Posterior cingulate gyrus (tissue), 11 donors: ENCODE measurements at regions of chrX and their contacts with region 1.

Region 1: GRCh38 chrX:137432608-137433007 is 133.3 kb upstream of the ZIC3 start:
- DNase-seq: no peak

Region 2: GRCh38 chrX:137926090-137926489 is 493.5 kb after region 1 on chrX:
- intact Hi-C with region 1: loop called (anchors 5 kb)
- DNase-seq: no peak